Activated CD8-positive, alpha-beta memory T cell treated with anti-CD3 and anti-CD28 coated beads, Interleukin-2, amount 10 ng/mL, durations not matched to agents 7 days and 5 days (primary cell): ENCODE measurements at regions of chr1 and their contacts with region 1.

Region 1: GRCh38 chr1:172002725-172003345 is 161.5 kb downstream of the DNM3 start:
- DNase-seq: no peak
- ATAC-seq: no peak
- H3K4me3 Mint-ChIP-seq: no peak overlapping the region
- H3K27ac Mint-ChIP-seq: no peak overlapping the region
- H3K4me1 Mint-ChIP-seq: no peaks in the 10 kb centered on the region
- H3K27me3 Mint-ChIP-seq: no peaks in the 10 kb centered on the region

Region 2: DNA sequence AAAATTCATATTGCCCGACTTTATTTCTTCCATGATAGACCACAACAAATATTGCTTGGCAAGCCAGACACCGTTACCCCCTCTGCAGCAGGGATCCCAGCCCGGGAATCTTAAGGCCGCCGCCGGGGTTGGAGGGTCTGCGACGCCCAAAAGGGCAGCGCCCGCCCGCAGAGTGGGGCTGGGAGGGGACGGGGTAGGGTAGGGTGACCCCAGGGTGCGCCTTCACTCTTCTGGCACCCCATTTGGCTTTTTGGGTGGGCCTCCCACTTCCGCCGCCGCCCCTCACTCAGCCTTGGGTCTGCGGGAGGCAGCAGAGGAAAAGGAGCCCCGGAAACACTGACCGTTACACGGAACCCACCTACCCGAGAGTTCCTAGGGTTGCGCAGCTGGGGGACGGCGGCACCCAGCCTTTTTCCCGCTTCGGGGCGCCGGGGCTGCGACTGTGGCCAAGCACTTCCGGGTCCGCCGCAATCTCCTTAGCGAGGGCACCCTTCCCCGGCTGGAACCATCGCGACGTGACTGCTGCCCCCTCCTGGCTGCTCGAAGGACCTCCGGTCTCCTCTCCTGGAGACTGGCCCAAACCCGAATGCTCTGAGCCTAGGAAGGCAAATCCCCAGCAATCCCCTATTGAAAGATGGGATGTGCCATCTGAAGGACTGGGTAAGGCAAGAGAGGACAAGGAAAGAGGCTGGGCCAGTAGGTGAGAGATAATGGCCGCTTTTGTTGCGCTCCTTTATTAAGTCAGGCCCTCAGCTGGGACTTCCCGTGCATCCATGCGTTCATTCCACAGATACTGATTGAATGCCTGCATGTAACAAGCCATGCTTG is 441.0 kb after region 1 on chr1 and contains the start of gene PIGC:
- CTCF ChIA-PET with region 1: interaction called, 17 read pairs
- DNase-seq: peak; percentile 95
- ATAC-seq: peak; percentile 100
- H3K4me3 Mint-ChIP-seq: peak within 1 kb of the TSS; percentile 82
- H3K27ac Mint-ChIP-seq: peak within 1 kb of the TSS; percentile 82
- H3K4me1 Mint-ChIP-seq: peaks cover 27% of the 10 kb centered on the region
- H3K27me3 Mint-ChIP-seq: no peaks in the 10 kb centered on the region
- total RNA-seq, gene PIGC: 20.9 to 23.8 TPM